Thyroid gland (tissue), 4 donors: ENCODE measurements at regions of chr9 and their contacts with region 1.

Region 1: GRCh38 chr9:33076358-33077004 is at the start of gene SMU1:
- DNase-seq: peak; percentile 97
- H3K4me3 ChIP-seq: peak within 1 kb of the TSS; percentile 21 to 83 (median 31)
- H3K27ac ChIP-seq: peak within 1 kb of the TSS; percentile 75 to 85 (median 78)
- H3K4me1 ChIP-seq: peaks cover 4 to 7% of the 10 kb centered on the region in 2 donors
- H3K27me3 ChIP-seq: no peaks in the 10 kb centered on the region
- CTCF ChIP-seq: no peak
- POLR2A ChIP-seq: peak in 1 of 2 donors; percentile 88
- total RNA-seq, gene SMU1: 19.8 to 24.2 (median 22.1) TPM

Region 2: GRCh38 chr9:33167046-33167808 is 90.7 kb after region 1 on chr9 and contains the start of gene B4GALT1:
- intact Hi-C with region 1: loop called (anchors 5 kb)
- DNase-seq: peak; percentile 95 to 97
- H3K4me3 ChIP-seq: peak within 1 kb of the TSS; percentile 83 to 94 (median 87)
- H3K27ac ChIP-seq: peak within 1 kb of the TSS; percentile 98 to 99 (median 99)
- H3K4me1 ChIP-seq: peaks cover 47 to 56% of the 10 kb centered on the region in 2 donors
- H3K27me3 ChIP-seq: no peaks in the 10 kb centered on the region
- CTCF ChIP-seq: peak in 1 of 6 experiments; percentile 11
- POLR2A ChIP-seq: peak; percentile 84 to 85
- total RNA-seq, gene B4GALT1: 88.3 to 119 (median 103) TPM

Region 3: GRCh38 chr9:33177639-33178038 is 101.2 kb after region 1 on chr9:
- intact Hi-C with region 1: no loop called
- DNase-seq: no peak
- H3K4me3 ChIP-seq: no peak overlapping the region
- H3K27ac ChIP-seq: no peak overlapping the region
- H3K4me1 ChIP-seq: peaks cover 3 to 9% of the 10 kb centered on the region in 2 donors
- H3K27me3 ChIP-seq: no peaks in the 10 kb centered on the region
- CTCF ChIP-seq: no peak
- POLR2A ChIP-seq: no peak

Region 4: GRCh38 chr9:33225319-33226149 is 149.1 kb after region 1 on chr9:
- intact Hi-C with region 1: loop called (anchors 2 kb)
- DNase-seq: peak; percentile 60 to 68
- H3K4me3 ChIP-seq: no peak overlapping the region
- H3K27ac ChIP-seq: no peak overlapping the region
- H3K4me1 ChIP-seq: peaks cover 0 to under 1% of the 10 kb centered on the region in 2 donors
- H3K27me3 ChIP-seq: no peaks in the 10 kb centered on the region
- CTCF ChIP-seq: peak; percentile 62 to 90 (median 76)
- POLR2A ChIP-seq: no peak

Region 5: GRCh38 chr9:33272061-33272460 is 195.6 kb after region 1 on chr9:
- intact Hi-C with region 1: no loop called
- DNase-seq: no peak
- H3K4me3 ChIP-seq: no peak overlapping the region
- H3K27ac ChIP-seq: no peak overlapping the region
- H3K4me1 ChIP-seq: no peaks in the 10 kb centered on the region
- H3K27me3 ChIP-seq: no peaks in the 10 kb centered on the region
- CTCF ChIP-seq: no peak
- POLR2A ChIP-seq: no peak

Region 6: GRCh38 chr9:33330005-33330404 is 253.5 kb after region 1 on chr9:
- intact Hi-C with region 1: no loop called
- DNase-seq: no peak
- H3K4me3 ChIP-seq: no peak overlapping the region
- H3K27ac ChIP-seq: peak overlapping the region; percentile 90 to 92 (median 91)
- H3K4me1 ChIP-seq: peaks cover 25 to 32% of the 10 kb centered on the region in 2 donors
- H3K27me3 ChIP-seq: no peaks in the 10 kb centered on the region
- CTCF ChIP-seq: no peak
- POLR2A ChIP-seq: no peak

Region 7: DNA sequence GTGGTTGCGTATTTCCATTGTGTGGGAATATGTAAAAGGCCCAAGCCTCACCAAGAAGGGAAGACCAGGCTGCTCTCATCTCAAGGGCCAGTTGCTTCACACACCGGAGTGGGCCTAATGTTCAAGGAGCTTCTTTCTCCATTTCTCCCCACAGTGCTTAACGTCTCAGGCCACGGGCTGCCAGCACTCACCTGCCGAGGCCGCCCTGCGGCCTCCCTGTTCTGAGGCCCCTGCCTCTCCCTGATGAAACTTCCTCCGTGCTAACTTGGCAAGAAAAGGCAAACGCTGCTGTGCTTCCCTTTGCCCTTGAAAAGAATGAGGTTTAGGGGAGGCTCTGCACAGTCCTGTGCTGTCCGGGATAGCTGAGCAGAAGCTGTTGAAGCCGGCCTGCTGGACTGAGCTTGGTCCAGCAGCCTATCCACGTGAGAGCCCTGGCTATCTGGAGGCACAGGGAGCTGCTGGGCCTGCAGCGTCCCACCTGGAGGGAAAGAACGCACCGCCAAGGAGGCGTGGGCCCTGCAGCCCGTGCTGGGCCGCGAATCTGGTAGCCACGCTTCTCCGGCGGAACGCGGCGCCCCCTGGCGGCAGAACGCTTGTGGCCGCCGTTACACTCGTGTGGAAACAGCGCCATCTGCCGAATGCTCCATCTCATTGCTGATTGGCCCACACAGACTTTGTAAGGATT is 645.3 kb after region 1 on chr9:
- intact Hi-C with region 1: no loop called
- DNase-seq: peak; percentile 82 to 86
- H3K4me3 ChIP-seq: no peak overlapping the region
- H3K27ac ChIP-seq: no peak overlapping the region
- H3K4me1 ChIP-seq: no peaks in the 10 kb centered on the region
- H3K27me3 ChIP-seq: no peaks in the 10 kb centered on the region
- CTCF ChIP-seq: peak in 5 of 6 experiments; percentile 99 to 100 (median 100)
- POLR2A ChIP-seq: no peak